ENCODE measurements at regions of chr6 and their contacts with region 1.

Region 1: GRCh38 chr6:42661540-42662153 is 60.8 kb downstream of the PRPH2 start:
- DNase-seq: peak; percentile 80 to 89
- ATAC-seq: peak; percentile 92 to 100 (median 96)
- H3K4me3 ChIP-seq: no peak overlapping the region
- H3K4me3 Mint-ChIP-seq: no peak overlapping the region
- H3K27ac ChIP-seq: no peak overlapping the region
- H3K27ac Mint-ChIP-seq: peak overlapping the region in 1 of 2 donors; percentile 17
- H3K4me1 ChIP-seq: no peaks in the 10 kb centered on the region
- H3K4me1 Mint-ChIP-seq: no peaks in the 10 kb centered on the region
- H3K27me3 ChIP-seq: no peaks in the 10 kb centered on the region
- H3K27me3 Mint-ChIP-seq: no peaks in the 10 kb centered on the region
- CTCF ChIP-seq: peak; percentile 91

Region 2: GRCh38 chr6:42692137-42692911 is 30.7 kb after region 1 on chr6:
- intact Hi-C with region 1: no loop called
- DNase-seq: no peak
- ATAC-seq: no peak
- H3K4me3 ChIP-seq: no peak overlapping the region
- H3K4me3 Mint-ChIP-seq: no peak overlapping the region
- H3K27ac ChIP-seq: no peak overlapping the region
- H3K27ac Mint-ChIP-seq: peak overlapping the region; percentile 78 to 89
- H3K4me1 ChIP-seq: peaks cover 9% of the 10 kb centered on the region
- H3K4me1 Mint-ChIP-seq: peaks cover 22 to 24% of the 10 kb centered on the region in 2 donors
- H3K27me3 ChIP-seq: no peaks in the 10 kb centered on the region
- H3K27me3 Mint-ChIP-seq: no peaks in the 10 kb centered on the region
- CTCF ChIP-seq: no peak

Region 3: DNA sequence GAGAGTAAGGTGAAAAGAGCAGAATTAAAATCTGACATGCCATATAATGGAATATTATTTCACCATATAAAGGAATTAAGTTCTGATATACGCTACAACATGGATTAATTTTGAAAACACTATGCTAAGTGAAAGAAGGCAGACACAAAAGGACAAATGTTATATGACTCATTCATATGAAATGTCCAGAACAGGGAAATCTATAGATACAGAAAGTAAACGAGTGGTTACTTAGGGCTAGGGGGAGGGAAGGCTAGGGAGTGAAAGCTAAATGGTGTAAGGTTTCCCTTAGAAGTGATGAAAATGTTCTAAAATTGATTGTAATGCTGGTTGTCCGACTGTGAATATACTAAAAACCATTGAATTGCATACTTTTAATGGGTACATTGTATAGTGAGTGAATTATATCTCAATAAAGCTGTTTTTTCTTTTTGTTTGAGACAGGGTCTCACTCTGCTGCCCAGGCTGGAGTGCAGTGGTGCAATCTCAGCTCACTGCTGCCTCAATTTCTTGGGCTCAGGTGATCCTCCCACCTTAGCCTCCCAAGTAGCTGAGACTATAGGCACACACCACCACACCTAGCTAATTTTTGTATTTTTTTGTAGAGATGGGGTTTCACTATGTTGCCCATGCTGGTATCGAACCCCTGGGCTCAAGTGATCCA is 52.6 kb after region 1 on chr6:
- intact Hi-C with region 1: no loop called
- DNase-seq: no peak
- ATAC-seq: no peak
- H3K4me3 ChIP-seq: no peak overlapping the region
- H3K4me3 Mint-ChIP-seq: no peak overlapping the region
- H3K27ac ChIP-seq: no peak overlapping the region
- H3K27ac Mint-ChIP-seq: no peak overlapping the region
- H3K4me1 ChIP-seq: no peaks in the 10 kb centered on the region
- H3K4me1 Mint-ChIP-seq: no peaks in the 10 kb centered on the region
- H3K27me3 ChIP-seq: no peaks in the 10 kb centered on the region
- H3K27me3 Mint-ChIP-seq: peaks cover 0 to 4% of the 10 kb centered on the region in 2 donors
- CTCF ChIP-seq: no peak

Region 4: DNA sequence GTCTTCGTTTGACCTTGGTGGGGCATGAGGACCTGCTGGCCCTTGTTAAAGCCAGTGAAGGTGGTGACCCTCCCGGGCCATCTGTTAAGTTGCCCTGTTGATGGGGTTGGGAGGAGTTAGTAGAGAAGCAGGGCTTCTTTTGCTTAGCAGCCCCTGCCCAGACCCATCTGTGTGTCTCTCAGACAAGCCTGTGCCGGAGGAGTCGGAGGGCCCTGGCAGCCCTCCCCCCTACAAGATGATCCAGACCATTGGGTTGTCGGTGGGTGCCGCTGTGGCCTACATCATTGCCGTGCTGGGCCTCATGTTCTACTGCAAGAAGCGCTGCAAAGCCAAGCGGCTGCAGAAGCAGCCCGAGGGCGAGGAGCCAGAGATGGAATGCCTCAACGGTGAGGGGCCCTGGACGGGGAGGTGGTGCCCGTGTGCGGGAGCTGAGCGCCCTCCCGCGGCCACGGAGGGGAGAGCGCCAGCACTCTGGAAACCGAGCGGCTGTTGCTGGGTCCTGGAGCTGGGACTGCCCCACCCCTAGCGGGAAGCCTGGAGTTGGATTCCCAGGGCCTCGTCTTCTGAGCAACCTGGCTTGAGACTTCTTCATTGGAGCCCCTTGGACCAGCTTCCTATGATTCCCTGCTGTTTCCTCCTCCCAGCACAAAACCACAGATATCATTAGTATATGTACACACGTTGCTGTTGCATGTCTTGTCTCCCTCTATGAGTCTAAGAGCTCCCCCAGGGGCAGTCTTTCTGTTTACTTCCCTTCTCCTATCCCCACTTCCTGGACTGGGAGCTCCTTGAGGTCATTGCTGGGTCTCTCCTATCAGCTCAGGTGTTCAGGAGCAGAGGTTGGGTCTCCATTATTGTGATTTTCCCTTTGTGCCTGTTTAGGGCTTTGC is 481.8 kb after region 1 on chr6:
- intact Hi-C with region 1: loop called (anchors 5 kb)
- DNase-seq: peak; percentile 74 to 89
- ATAC-seq: peak; percentile 85 to 98 (median 86)
- H3K4me3 ChIP-seq: no peak overlapping the region
- H3K4me3 Mint-ChIP-seq: no peak overlapping the region
- H3K27ac ChIP-seq: no peak overlapping the region
- H3K27ac Mint-ChIP-seq: peak overlapping the region in 1 of 2 donors; percentile 53
- H3K4me1 ChIP-seq: peaks cover 19% of the 10 kb centered on the region
- H3K4me1 Mint-ChIP-seq: peaks cover 0 to 20% of the 10 kb centered on the region in 2 donors
- H3K27me3 ChIP-seq: no peaks in the 10 kb centered on the region
- H3K27me3 Mint-ChIP-seq: no peaks in the 10 kb centered on the region
- CTCF ChIP-seq: peak; percentile 91